ENCODE measurements at regions of chr2 and their contacts with region 1.

Region 1: DNA sequence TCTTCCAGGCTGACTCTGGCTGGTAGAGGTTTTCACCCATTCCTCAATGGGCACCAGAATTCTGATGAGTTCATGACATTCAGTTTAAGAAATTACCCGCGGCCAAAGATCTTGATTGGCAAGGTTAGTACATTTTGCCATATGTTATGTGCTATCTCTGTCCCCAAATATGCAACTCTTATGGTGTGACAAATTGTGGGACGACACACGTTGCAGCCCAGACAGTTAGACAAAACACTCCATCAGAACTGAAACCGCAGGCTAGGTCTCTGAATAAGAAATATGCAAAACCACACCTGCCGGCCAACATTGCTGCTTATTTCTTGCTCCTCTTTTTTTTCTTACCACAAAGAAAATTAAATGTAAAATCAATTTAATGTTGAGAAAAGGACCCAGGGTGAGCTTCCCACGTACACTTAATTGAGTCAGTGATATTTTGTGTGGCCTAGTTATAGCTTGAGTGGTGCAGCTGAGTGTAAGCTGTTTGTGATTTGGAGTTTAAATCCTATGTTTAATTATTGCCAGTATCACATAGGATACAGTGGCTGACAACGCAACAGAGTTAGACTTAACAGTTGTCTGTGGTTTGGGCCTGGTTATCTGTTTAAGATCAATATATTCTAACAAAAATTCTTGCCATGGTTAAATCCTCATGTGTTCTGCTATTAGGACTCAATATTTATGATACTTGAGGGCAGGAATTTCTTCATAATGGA is 35.7 kb upstream of the LTBP1 start:
- DNase-seq: peak; percentile 38
- ATAC-seq: peak; percentile 85
- H3K4me3 ChIP-seq: 0 out of 2 replicates have a peak overlapping the region, but pooled peaks have one; percentile 3
- H3K27ac ChIP-seq: no peak overlapping the region; the same call in 1 of the 2 replicates
- H3K4me1 ChIP-seq: peaks cover 19% of the 10 kb centered on the region
- H3K27me3 ChIP-seq: no peaks in the 10 kb centered on the region
- CTCF ChIP-seq: no peak
- EP300 ChIP-seq: 0 out of 4 replicates have a peak, but pooled peaks of 1 of the 2 experiments have one; percentile 29
- POLR2A ChIP-seq: no peak
- RAD21 ChIP-seq: no peak

Region 2: DNA sequence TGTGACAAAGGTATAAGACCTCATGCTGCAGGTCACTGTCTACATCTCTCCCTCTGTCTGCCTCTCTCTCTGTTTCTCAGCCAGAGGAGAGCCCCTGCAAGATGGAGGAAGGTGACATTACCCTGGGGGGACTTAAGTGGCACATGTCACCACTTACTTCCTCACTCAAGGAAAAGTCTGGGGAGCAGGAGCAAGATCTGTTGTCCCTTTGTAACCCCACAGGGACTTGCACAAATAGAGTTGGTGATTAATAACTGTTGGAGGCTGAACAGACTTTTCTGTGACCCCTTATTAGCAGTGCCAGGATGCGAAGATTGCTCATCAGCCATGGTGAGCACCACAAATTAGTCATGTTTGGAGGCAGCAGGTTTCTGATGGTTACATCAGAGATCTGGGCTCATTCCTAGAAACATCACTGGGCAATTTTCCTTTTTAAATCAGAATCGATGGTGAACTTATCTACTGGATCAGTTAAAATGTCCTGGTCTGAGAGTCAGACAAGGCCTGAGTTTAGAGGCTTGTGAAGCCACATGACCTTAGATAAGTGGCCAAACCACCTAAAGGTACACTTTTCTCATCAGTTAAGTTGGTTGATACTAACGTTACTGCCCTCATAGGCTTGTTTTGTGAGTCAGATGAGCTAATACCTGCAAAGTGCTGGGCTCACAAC is 45.5 kb before region 1 on chr2:
- CTCF ChIA-PET with region 1: no interaction called
- POLR2A ChIA-PET with region 1: no interaction called
- RAD21 ChIA-PET with region 1: no interaction called
- SMC1A ChIA-PET with region 1: no interaction called
- in situ Hi-C with region 1: no loop called
- intact Hi-C with region 1: no loop called
- DNase-seq: no peak
- ATAC-seq: peak; percentile 62
- H3K4me3 ChIP-seq: no peak overlapping the region
- H3K27ac ChIP-seq: no peak overlapping the region
- H3K4me1 ChIP-seq: no peaks in the 10 kb centered on the region
- H3K27me3 ChIP-seq: no peaks in the 10 kb centered on the region
- CTCF ChIP-seq: no peak
- EP300 ChIP-seq: no peak
- POLR2A ChIP-seq: no peak
- RAD21 ChIP-seq: no peak

Region 3: GRCh38 chr2:32923109-32923508 is 12.1 kb after region 1 on chr2:
- CTCF ChIA-PET with region 1: no interaction called
- POLR2A ChIA-PET with region 1: no interaction called
- RAD21 ChIA-PET with region 1: no interaction called
- SMC1A ChIA-PET with region 1: no interaction called
- in situ Hi-C with region 1: no loop called
- intact Hi-C with region 1: loop called (anchors 1 kb)
- DNase-seq: no peak
- ATAC-seq: no peak
- H3K4me3 ChIP-seq: no peak overlapping the region
- H3K27ac ChIP-seq: no peak overlapping the region
- H3K4me1 ChIP-seq: no peaks in the 10 kb centered on the region
- H3K27me3 ChIP-seq: no peaks in the 10 kb centered on the region; a peak in 1 of 4 replicates
- CTCF ChIP-seq: no peak
- EP300 ChIP-seq: no peak
- POLR2A ChIP-seq: no peak
- RAD21 ChIP-seq: no peak